ENCODE measurements at regions of chr10 and their contacts with region 1.

Region 1: GRCh38 chr10:20624642-20625041 is 272.5 kb downstream of the NEBL start:
- DNase-seq: no peak
- H3K4me3 ChIP-seq: no peak overlapping the region
- H3K4me3 Mint-ChIP-seq: no peak overlapping the region
- H3K27ac Mint-ChIP-seq: no peak overlapping the region
- H3K4me1 ChIP-seq: peaks cover 8% of the 10 kb centered on the region
- H3K4me1 Mint-ChIP-seq: peaks cover 7% of the 10 kb centered on the region
- H3K27me3 ChIP-seq: no peaks in the 10 kb centered on the region
- H3K27me3 Mint-ChIP-seq: peaks cover 5% of the 10 kb centered on the region
- CTCF ChIP-seq: no peak

Region 2: DNA sequence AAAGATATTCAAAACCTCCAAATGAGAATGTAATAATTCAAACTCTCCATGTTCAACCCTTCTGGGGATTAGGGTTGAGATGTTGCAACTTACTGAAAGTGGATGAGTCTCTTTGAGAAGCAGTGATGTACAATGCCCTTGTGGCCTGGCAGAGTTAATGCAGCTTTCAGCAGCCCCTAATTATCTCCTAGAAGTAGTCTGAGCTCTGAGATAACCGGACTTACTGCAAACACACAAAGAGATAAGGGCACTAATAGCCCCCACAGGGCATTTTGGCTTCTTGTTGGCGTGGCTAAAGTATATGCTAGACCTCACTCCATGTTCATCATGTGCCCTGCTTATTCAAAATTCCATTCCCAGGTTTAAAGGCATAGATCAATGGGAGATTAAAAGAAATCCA is 132.2 kb before region 1 on chr10:
- CTCF ChIA-PET with region 1: no interaction called
- POLR2A ChIA-PET with region 1: no interaction called
- intact Hi-C with region 1: loop called (anchors 1 kb)
- DNase-seq: peak; percentile 45 to 53
- H3K4me3 ChIP-seq: no peak overlapping the region
- H3K4me3 Mint-ChIP-seq: no peak overlapping the region
- H3K27ac Mint-ChIP-seq: no peak overlapping the region
- H3K4me1 ChIP-seq: no peaks in the 10 kb centered on the region
- H3K4me1 Mint-ChIP-seq: peaks cover 6% of the 10 kb centered on the region
- H3K27me3 ChIP-seq: no peaks in the 10 kb centered on the region
- H3K27me3 Mint-ChIP-seq: no peaks in the 10 kb centered on the region
- CTCF ChIP-seq: peak; percentile 26 to 50

Region 3: GRCh38 chr10:20682782-20683181 is 58.1 kb after region 1 on chr10:
- CTCF ChIA-PET with region 1: no interaction called
- POLR2A ChIA-PET with region 1: no interaction called
- intact Hi-C with region 1: no loop called
- DNase-seq: peak in 1 of 2 experiments; percentile 14
- H3K4me3 ChIP-seq: no peak overlapping the region
- H3K4me3 Mint-ChIP-seq: no peak overlapping the region
- H3K27ac Mint-ChIP-seq: peak overlapping the region; percentile 22
- H3K4me1 ChIP-seq: peaks cover 13% of the 10 kb centered on the region
- H3K4me1 Mint-ChIP-seq: peaks cover 15% of the 10 kb centered on the region
- H3K27me3 ChIP-seq: no peaks in the 10 kb centered on the region
- H3K27me3 Mint-ChIP-seq: no peaks in the 10 kb centered on the region
- CTCF ChIP-seq: no peak